Activated B cell treated with CpG ODN at 0.5 μM for 24 hours (primary cell): ENCODE measurements at regions of chr9 and their contacts with region 1.

Region 1: GRCh38 chr9:127916665-127917613 is at the start of gene ST6GALNAC4:
- DNase-seq: peak; percentile 94
- ATAC-seq: peak; percentile 83
- H3K4me3 Mint-ChIP-seq: peak within 1 kb of the TSS; percentile 88
- H3K27ac Mint-ChIP-seq: peak within 1 kb of the TSS; percentile 95
- H3K4me1 Mint-ChIP-seq: peaks cover 74% of the 10 kb centered on the region
- H3K27me3 Mint-ChIP-seq: no peaks in the 10 kb centered on the region
- CTCF ChIP-seq: no peak
- total RNA-seq, gene ST6GALNAC4: 71.3 and 85.4 TPM in 2 replicates

Region 2: DNA sequence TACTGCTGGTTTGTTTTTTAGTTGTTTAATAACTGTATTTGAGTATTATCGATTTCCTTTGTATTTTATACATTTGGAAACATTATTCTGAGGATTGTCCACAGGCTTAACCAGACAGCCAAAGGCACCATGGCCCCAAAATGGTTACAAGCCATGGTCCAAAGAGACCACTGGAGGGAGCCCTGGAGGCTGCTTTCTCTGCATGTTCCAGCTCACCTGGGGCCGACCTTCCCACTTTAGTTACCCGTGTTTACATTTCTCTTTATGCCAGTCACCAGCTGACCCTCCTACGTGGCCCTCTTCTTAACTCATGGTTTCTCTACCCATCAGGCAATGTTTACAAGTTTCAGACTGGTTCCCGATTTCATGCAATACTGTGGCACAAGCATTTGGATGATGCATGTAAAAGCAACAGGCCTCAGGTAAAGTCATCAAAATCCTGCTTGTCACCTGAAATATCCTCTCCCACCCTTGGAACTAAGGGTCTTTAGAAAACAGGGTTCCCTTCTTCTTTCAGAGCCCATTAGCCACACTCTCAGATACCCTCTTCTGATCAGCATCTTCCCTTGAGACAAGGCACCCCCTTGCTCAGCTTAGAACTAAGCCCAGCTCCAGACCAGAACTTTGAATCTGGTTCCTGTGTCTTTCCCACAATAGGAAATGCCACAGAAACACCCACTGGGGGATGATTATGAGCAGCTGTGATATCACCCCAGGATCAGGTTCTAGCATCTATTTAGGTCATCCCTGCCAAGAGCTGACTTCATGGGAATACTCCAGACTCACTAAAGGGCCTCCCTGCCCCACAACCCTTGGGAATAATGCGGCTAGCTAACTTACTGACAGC is 702.3 kb before region 1 on chr9:
- CTCF ChIA-PET with region 1: interaction called, 12 read pairs
- POLR2A ChIA-PET with region 1: no interaction called
- intact Hi-C with region 1: loop called (anchors 1 kb)
- DNase-seq: no peak
- ATAC-seq: peak; percentile 86
- H3K4me3 Mint-ChIP-seq: no peak overlapping the region
- H3K27ac Mint-ChIP-seq: no peak overlapping the region
- H3K4me1 Mint-ChIP-seq: peaks cover 4% of the 10 kb centered on the region
- H3K27me3 Mint-ChIP-seq: no peaks in the 10 kb centered on the region
- CTCF ChIP-seq: peak; percentile 17

Region 3: GRCh38 chr9:127586537-127586936 is 330.4 kb before region 1 on chr9:
- CTCF ChIA-PET with region 1: interaction called, 26 read pairs
- POLR2A ChIA-PET with region 1: no interaction called
- intact Hi-C with region 1: loop called (anchors 1 kb)
- DNase-seq: no peak
- ATAC-seq: peak; percentile 64
- H3K4me3 Mint-ChIP-seq: no peak overlapping the region
- H3K27ac Mint-ChIP-seq: no peak overlapping the region
- H3K4me1 Mint-ChIP-seq: no peaks in the 10 kb centered on the region
- H3K27me3 Mint-ChIP-seq: peaks cover 24% of the 10 kb centered on the region
- CTCF ChIP-seq: no peak

Region 4: DNA sequence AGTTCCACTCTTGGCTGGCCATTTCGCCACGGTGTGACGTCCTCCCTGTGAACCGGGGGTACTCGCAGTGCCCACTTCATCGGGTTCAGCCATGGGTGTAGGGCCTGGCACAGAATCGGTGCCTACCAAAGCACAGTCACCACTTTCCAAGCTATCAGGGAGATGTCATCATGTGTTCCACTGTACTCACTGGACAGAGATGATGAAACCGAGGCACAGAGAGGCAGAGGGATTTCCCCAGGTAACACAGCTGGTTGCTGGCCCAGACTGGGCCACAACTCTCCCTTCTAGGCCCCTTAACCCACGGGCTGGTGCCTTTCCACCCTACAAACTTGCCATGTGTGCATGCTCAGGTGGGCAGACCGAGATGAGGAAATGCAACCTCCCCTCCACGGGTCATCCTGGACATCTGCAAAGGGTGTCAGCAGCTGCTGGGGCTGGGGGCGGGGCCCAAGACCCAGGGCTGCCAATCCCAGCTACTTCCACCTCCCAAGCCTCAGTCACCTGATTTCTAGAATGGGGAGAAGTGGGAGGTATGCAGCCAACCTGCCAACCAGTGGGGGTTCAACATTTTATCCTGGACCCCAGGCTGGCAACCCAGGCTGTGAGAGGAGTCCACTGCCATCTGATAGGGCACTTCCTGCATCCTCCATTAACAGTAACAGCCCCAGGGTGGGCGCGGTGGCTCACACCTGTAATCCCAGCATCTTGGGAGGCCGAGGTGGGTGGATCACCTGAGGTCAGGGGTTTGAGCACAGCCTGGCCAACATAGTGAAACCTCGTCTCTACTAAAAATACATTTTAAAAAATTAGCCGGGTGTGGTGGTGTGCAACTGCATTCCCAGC is 137.6 kb before region 1 on chr9:
- CTCF ChIA-PET with region 1: interaction called, 5 read pairs
- POLR2A ChIA-PET with region 1: interaction called, 65 read pairs
- intact Hi-C with region 1: no loop called
- DNase-seq: peak; percentile 63
- ATAC-seq: peak; percentile 61
- H3K4me3 Mint-ChIP-seq: peak overlapping the region; percentile 94
- H3K27ac Mint-ChIP-seq: peak overlapping the region; percentile 98
- H3K4me1 Mint-ChIP-seq: peaks cover 70% of the 10 kb centered on the region
- H3K27me3 Mint-ChIP-seq: no peaks in the 10 kb centered on the region
- CTCF ChIP-seq: no peak

Region 5: GRCh38 chr9:127862075-127863011 is 54.6 kb before region 1 on chr9:
- CTCF ChIA-PET with region 1: interaction called, 4 read pairs
- POLR2A ChIA-PET with region 1: interaction called, 11 read pairs
- intact Hi-C with region 1: loop called (anchors 1 kb)
- DNase-seq: peak; percentile 48
- ATAC-seq: peak; percentile 60
- H3K4me3 Mint-ChIP-seq: peak overlapping the region; percentile 41
- H3K27ac Mint-ChIP-seq: peak overlapping the region; percentile 93
- H3K4me1 Mint-ChIP-seq: peaks cover 65% of the 10 kb centered on the region
- H3K27me3 Mint-ChIP-seq: no peaks in the 10 kb centered on the region
- CTCF ChIP-seq: no peak

Region 6: DNA sequence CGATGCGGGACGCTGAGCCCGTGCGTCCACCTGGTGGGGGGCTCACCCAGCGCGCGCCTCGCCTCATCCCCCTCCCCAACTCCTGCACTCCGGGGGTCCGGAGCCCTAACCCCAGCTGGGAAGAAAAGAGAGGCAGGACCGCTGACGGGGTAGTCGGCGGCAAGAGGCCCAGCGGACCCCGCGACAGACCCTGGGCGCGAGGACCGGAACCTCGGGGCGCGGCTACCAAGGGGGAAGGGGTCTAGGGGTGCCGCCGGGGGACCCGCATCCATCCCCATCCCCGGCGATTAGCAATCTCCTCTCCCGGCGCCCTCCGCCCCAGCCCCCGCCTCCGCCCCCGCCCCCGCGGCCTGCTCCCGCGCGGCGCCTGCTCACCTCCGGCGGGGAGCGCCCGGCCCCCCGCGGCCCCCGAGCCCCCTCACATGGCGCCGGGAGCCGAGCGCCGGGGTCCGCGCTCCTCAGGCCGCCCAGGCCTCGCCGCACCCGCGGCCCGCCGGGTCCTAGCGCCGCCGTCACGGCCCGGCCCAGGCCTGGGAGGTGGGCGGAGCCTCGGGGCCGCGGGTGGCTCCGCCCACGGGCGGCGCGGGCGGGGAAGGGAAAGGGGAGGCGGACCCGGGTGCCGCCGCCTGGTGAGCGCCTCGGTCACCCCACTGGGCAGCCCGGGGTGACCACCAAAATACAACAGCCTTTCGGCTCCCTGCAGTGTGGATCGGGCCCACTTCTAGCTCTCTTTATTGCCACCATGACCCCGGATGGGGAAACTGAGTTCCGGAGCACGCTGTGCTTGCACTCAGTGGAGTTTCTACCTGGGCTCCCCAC is 17.6 kb before region 1 on chr9 and contains the start of gene ST6GALNAC6:
- CTCF ChIA-PET with region 1: interaction called, 6 read pairs
- POLR2A ChIA-PET with region 1: interaction called, 457 read pairs
- intact Hi-C with region 1: loop called (anchors 1 kb)
- DNase-seq: peak; percentile 84
- ATAC-seq: peak; percentile 81
- H3K4me3 Mint-ChIP-seq: peak within 1 kb of the TSS; percentile 88
- H3K27ac Mint-ChIP-seq: peak within 1 kb of the TSS; percentile 76
- H3K4me1 Mint-ChIP-seq: peaks cover 55% of the 10 kb centered on the region
- H3K27me3 Mint-ChIP-seq: no peaks in the 10 kb centered on the region
- CTCF ChIP-seq: no peak
- total RNA-seq, gene ST6GALNAC6: 39.9 and 47.5 TPM in 2 replicates

Region 7: DNA sequence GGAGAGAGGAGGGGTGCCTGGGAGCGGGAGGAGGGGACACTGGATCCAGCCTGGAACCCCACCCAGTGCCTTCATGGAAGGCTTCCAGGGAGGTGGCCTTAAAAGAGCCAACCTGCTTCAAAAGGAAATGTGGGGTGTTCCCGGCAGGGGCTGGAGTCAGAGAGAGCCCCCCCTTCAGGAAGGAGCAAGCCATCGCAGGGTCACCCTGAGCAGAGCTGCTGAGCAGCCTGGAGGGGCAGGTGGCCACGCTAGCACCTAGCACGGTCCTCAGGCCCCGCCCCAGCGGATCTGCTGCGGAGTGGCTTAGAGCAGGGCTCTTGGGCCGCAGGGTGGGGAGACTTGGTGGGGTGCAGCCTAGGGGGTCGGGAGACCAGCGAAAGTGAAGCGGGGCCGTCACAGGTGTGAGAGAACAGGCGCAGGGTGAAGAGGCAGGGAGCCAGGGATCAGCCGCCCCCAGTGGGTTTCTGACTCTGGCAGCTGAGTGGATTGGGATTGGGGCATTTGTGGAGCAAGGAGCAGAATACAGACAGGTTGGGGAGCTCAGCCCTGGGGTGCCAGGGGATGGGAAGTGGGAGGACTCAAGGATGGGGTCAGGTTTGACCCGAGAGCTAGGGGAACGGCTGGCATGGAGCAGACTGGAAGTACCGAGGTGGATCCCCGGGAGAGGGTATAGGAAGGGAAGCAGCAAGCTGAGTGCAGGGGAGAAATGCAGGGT is 233.8 kb after region 1 on chr9:
- CTCF ChIA-PET with region 1: no interaction called
- POLR2A ChIA-PET with region 1: no interaction called
- intact Hi-C with region 1: no loop called
- DNase-seq: no peak
- ATAC-seq: peak; percentile 54
- H3K4me3 Mint-ChIP-seq: no peak overlapping the region
- H3K27ac Mint-ChIP-seq: no peak overlapping the region
- H3K4me1 Mint-ChIP-seq: no peaks in the 10 kb centered on the region
- H3K27me3 Mint-ChIP-seq: peaks cover 3% of the 10 kb centered on the region
- CTCF ChIP-seq: no peak